ENCODE measurements at regions of chr3 and their contacts with region 1.

Region 1: DNA sequence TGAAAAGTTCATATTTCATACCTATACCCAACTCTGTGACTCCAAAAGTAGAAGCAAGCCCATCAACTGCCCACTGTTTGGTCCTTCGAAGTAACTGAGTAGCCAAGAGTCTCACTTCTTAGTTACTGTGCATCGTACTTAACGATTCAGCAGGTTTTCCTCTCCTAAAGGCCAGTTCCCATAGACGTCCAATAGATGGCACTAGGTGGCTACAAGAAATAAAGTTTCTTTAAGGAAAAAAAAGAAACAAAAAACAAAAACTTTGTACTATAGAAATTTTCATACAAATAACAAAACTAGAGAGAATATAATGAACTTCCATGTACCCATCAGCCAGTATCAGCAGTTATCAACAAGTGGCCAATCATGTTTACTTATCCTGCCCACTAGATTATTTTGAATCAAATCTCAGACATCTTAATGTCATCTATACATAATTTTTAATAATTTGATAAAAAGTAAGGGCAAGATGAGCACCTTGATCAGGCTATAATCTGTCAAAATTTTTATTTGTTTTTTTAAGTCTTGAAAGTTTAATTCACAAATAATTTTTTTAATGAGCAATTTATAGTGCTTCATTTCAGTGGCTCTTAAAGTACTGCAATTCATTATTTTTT is 63.8 kb upstream of the ACP3 start:
- DNase-seq: no peak
- H3K4me3 Mint-ChIP-seq: no peak overlapping the region
- H3K27ac Mint-ChIP-seq: no peak overlapping the region
- H3K4me1 Mint-ChIP-seq: no peaks in the 10 kb centered on the region
- H3K27me3 Mint-ChIP-seq: peaks cover 4% of the 10 kb centered on the region

Region 2: GRCh38 chr3:132343018-132343612 is 89.7 kb after region 1 on chr3:
- CTCF ChIA-PET with region 1: interaction called, 30 read pairs
- POLR2A ChIA-PET with region 1: no interaction called
- intact Hi-C with region 1: loop called (anchors 1 kb)
- DNase-seq: peak; percentile 16
- H3K4me3 Mint-ChIP-seq: no peak overlapping the region
- H3K27ac Mint-ChIP-seq: no peak overlapping the region
- H3K4me1 Mint-ChIP-seq: peaks cover 4% of the 10 kb centered on the region
- H3K27me3 Mint-ChIP-seq: peaks cover 8% of the 10 kb centered on the region